Heart left ventricle (tissue), 16 donors: ENCODE measurements at regions of chr9 and their contacts with region 1.

Region 1: DNA sequence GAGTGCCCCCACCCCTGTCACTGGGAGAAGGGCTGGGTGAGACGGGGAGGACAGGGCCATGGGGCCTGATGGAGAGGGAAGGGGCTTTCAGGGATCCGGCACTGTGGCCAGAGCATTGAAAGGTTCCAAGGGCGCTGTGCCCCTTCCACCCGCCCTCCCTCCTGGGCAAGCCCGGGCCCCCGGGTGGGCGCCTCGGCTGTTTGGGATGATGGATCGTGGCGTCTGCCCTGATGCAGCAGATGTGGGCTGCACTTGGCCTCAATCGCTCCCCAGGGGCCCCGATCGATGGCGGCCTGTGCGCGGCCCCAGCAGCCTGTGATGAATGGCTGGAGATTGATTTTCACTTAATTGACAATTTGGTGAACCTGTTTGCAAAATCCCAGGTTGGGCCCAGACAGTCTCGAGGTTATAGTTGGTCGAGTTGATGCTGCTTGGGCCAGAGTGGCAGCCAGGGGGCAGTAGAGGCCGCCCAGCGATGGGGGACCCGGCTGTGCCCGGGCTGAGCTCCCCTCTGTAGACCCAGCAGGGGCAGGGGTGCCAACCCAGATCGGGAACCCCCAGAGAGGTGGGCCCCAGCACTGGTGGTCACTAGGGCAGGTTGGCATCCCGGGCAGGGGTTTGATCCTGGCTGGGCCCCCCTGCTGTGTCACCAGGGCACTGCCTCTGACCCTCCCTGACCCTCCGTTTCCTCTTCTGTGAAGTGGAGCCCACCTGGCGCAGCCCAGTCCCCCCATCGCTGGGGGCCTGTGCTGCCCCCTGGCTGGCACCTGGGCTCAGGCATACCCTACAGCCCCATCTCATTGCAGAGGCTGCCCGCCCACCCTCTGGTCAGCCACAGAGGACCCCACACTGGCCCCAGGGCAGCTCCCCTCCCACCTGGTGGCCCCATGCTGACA is 34.7 kb downstream of the LHX3 start:
- DNase-seq: peak in 2 of 5 donors; percentile 21 to 68
- ATAC-seq: peak in 3 of 4 donors; percentile 52 to 62 (median 57)
- H3K4me3 ChIP-seq: no peak overlapping the region
- H3K27ac ChIP-seq: no peak overlapping the region
- H3K4me1 ChIP-seq: no peaks in the 10 kb centered on the region
- H3K27me3 ChIP-seq: peaks cover 0 to 46% (median 14%) of the 10 kb centered on the region in 9 donors
- CTCF ChIP-seq: peak; percentile 48 to 73 (median 60)
- POLR2A ChIP-seq: no peak

Region 2: DNA sequence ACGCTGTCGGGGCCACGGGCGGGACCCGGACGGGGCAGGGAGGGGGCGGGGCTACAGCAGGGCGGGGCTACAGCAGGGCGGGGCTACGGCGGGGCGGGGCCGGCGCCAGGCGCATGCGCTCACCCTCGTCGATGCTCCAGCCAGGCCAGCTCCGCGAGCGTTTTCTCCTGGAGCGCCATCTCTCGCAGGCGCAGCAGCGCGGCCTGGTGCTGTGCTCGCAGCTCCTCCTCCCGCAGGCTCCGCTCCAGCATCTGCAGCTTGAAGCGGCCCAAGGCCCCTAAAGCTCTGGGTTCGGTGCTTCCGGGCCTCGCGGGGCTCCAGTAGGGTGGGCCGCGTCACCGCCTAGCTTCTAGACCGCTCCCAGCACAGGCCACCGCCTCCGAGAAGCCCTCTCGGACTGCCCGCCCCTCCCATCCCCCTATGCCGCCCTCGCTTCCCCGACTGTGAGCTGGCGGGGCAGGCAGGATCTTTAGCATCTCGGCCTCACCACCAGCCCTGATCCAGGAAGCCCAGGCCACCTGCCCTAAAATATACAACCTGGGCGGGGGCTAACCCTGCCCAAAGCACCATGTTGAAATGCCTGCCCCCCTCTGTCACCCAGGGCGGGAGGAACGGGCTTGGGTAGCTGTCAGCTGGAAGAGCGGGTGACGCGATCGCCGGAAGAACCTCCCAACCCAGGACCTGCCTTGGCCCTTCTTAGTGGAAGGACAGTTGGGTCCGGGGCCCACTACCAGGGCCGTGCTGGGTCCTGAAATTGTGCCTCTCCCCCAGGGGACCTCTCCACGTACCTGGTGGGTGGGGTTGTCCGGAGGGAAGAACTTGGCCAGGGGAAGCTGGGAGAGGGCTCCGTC is 97.2 kb after region 1 on chr9:
- intact Hi-C with region 1: loop called in 2 of 10 experiments (anchors 5 kb)
- DNase-seq: peak; percentile 71 to 94 (median 85)
- ATAC-seq: peak; percentile 71 to 97 (median 96)
- H3K4me3 ChIP-seq: peak overlapping the region; percentile 8 to 67 (median 48)
- H3K27ac ChIP-seq: peak overlapping the region in 4 of 12 donors; percentile 39 to 64 (median 58)
- H3K4me1 ChIP-seq: peaks cover 0 to 10% (median 6%) of the 10 kb centered on the region in 12 donors
- H3K27me3 ChIP-seq: peaks cover 0 to 12% (median 0%) of the 10 kb centered on the region in 9 donors
- CTCF ChIP-seq: peak in 6 of 12 donors; percentile 19 to 47 (median 32)
- POLR2A ChIP-seq: peak in 1 of 2 donors; percentile 34

Region 3: DNA sequence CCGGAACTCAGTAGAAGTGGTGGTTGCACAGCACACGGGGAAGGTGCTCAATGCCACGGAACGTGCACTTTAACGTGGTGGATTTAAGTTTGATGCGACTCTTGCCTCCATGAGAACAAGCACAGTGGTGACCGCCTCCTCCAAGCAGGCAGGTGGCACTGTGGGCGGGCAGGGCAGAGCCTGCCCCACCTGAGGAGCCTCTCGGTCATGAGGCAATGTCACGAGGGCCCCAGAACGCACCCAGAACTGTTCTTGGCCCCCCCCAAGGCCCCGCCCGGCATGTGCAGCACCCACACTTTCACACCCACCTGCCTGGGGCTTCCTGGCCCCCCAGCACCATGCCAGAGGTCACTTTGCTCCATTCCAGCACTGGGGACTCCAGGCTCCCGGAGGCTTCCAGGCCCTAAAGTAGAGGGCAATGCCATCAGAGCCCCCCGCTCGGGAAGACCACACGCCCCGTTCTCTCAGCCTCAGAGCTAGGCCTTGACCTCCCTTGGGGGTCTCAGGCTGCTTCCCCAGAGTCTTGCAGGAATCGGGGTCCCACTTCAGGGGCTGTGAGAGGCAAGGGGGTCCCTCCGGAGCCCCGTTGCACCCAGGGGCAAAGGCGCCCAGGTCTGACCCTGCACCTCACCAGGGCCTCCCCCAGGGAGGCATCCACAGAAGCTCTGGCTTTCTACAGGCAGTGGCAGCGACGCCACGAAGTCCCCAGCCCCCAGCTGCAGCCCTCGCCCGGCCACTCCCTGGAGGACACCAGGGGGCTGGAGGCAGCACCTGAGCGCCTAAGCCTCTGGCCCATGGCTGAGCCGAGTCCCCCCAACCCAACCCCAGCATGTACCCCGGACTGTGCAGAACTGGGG is 119.6 kb after region 1 on chr9:
- intact Hi-C with region 1: loop called in 2 of 10 experiments (anchors 2 to 5 kb)
- DNase-seq: no peak
- ATAC-seq: no peak
- H3K4me3 ChIP-seq: no peak overlapping the region
- H3K27ac ChIP-seq: no peak overlapping the region
- H3K4me1 ChIP-seq: no peaks in the 10 kb centered on the region
- H3K27me3 ChIP-seq: peaks cover 0 to 31% (median 11%) of the 10 kb centered on the region in 9 donors
- CTCF ChIP-seq: no peak
- POLR2A ChIP-seq: no peak